T-cell (primary cell): ENCODE measurements at regions of chr16 and their contacts with region 1.

Region 1: DNA sequence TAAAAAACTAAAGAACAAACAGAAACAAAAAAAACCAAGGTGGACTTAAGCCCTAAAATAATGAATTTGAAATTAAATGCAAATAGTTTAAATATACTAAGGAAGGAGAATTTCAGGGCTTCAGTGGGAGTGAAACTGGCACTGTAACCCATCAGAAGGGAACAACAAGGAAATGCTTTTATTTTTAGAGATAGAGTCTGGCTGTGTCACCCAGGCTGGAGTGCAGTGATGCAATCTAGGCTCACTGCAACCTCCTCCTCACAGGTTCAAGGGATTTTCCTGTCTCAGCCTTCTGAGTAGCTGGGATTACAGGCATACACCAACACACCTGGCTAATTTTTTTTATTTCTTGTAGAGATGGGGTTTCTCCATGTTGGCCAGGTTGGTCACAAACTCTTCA is 625.2 kb upstream of the CDH8 start:
- DNase-seq: no peak
- ATAC-seq: no peak
- H3K4me3 ChIP-seq: no peak overlapping the region
- H3K4me3 Mint-ChIP-seq: no peak overlapping the region
- H3K27ac ChIP-seq: no peak overlapping the region
- H3K27ac Mint-ChIP-seq: no peak overlapping the region
- H3K4me1 ChIP-seq: no peaks in the 10 kb centered on the region
- H3K4me1 Mint-ChIP-seq: no peaks in the 10 kb centered on the region
- H3K27me3 ChIP-seq: no peaks in the 10 kb centered on the region
- H3K27me3 Mint-ChIP-seq: no peaks in the 10 kb centered on the region

Region 2: GRCh38 chr16:62392698-62393097 is 268.7 kb before region 1 on chr16:
- CTCF ChIA-PET with region 1: no interaction called
- POLR2A ChIA-PET with region 1: no interaction called
- DNase-seq: no peak
- ATAC-seq: no peak
- H3K4me3 ChIP-seq: no peak overlapping the region
- H3K4me3 Mint-ChIP-seq: no peak overlapping the region
- H3K27ac ChIP-seq: no peak overlapping the region
- H3K27ac Mint-ChIP-seq: no peak overlapping the region
- H3K4me1 ChIP-seq: no peaks in the 10 kb centered on the region
- H3K4me1 Mint-ChIP-seq: no peaks in the 10 kb centered on the region
- H3K27me3 ChIP-seq: no peaks in the 10 kb centered on the region
- H3K27me3 Mint-ChIP-seq: no peaks in the 10 kb centered on the region

Region 3: GRCh38 chr16:62568926-62569325 is 92.5 kb before region 1 on chr16:
- CTCF ChIA-PET with region 1: no interaction called
- POLR2A ChIA-PET with region 1: no interaction called
- DNase-seq: no peak
- ATAC-seq: no peak
- H3K4me3 ChIP-seq: no peak overlapping the region
- H3K4me3 Mint-ChIP-seq: no peak overlapping the region
- H3K27ac ChIP-seq: no peak overlapping the region
- H3K27ac Mint-ChIP-seq: no peak overlapping the region
- H3K4me1 ChIP-seq: no peaks in the 10 kb centered on the region
- H3K4me1 Mint-ChIP-seq: no peaks in the 10 kb centered on the region
- H3K27me3 ChIP-seq: no peaks in the 10 kb centered on the region
- H3K27me3 Mint-ChIP-seq: no peaks in the 10 kb centered on the region

Region 4: DNA sequence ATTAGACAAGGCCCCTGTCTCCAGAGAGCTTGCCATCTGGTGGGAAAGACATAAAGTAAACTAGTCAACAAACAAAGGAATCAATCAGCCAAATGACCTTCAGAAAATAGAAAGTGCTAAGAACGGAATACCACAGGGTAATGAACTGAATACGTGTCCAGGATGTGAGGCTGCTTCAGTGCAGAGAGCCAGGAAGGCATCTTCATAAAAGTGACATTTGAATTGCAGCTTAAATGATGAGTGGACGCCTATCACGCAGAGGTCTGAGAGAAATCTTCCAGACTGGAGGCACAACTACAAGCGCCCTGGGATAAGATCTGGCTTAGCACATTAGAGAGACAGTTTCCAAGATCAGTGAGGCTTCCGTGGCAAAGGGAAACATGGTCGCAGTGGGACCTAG is 51.1 kb before region 1 on chr16:
- CTCF ChIA-PET with region 1: no interaction called
- POLR2A ChIA-PET with region 1: no interaction called
- DNase-seq: no peak
- ATAC-seq: no peak
- H3K4me3 ChIP-seq: no peak overlapping the region
- H3K4me3 Mint-ChIP-seq: no peak overlapping the region
- H3K27ac ChIP-seq: no peak overlapping the region
- H3K27ac Mint-ChIP-seq: no peak overlapping the region
- H3K4me1 ChIP-seq: no peaks in the 10 kb centered on the region
- H3K4me1 Mint-ChIP-seq: no peaks in the 10 kb centered on the region
- H3K27me3 ChIP-seq: no peaks in the 10 kb centered on the region
- H3K27me3 Mint-ChIP-seq: no peaks in the 10 kb centered on the region

Region 5: GRCh38 chr16:62644030-62644801 is 17.2 kb before region 1 on chr16:
- CTCF ChIA-PET with region 1: no interaction called
- POLR2A ChIA-PET with region 1: no interaction called
- DNase-seq: no peak
- ATAC-seq: no peak
- H3K4me3 ChIP-seq: no peak overlapping the region
- H3K4me3 Mint-ChIP-seq: no peak overlapping the region
- H3K27ac ChIP-seq: no peak overlapping the region
- H3K27ac Mint-ChIP-seq: no peak overlapping the region
- H3K4me1 ChIP-seq: no peaks in the 10 kb centered on the region
- H3K4me1 Mint-ChIP-seq: no peaks in the 10 kb centered on the region
- H3K27me3 ChIP-seq: no peaks in the 10 kb centered on the region
- H3K27me3 Mint-ChIP-seq: no peaks in the 10 kb centered on the region

Region 6: DNA sequence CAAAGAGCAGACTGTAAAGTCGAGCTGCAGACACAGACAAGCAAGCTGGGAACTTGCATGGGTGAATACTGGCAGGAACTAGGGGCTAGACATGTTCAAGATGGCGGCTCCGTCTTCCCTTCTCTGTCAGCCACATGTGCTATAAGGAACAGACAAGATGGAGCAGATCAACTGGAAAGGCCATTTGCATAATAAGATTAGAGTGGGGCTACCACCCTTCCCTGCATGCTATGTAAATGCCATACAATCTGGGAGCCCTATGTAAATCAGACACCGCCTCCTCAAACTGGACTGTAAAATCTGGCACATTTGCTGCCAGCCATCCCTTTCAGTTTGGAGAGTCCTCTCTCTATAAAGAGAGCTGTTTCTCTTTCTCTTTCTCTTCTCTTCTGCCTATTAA is 14.9 kb after region 1 on chr16:
- CTCF ChIA-PET with region 1: interaction called in 1 of 2 experiments, 21 read pairs
- POLR2A ChIA-PET with region 1: no interaction called
- DNase-seq: no peak
- ATAC-seq: no peak
- H3K4me3 ChIP-seq: no peak overlapping the region
- H3K4me3 Mint-ChIP-seq: no peak overlapping the region
- H3K27ac ChIP-seq: no peak overlapping the region
- H3K27ac Mint-ChIP-seq: no peak overlapping the region
- H3K4me1 ChIP-seq: no peaks in the 10 kb centered on the region
- H3K4me1 Mint-ChIP-seq: no peaks in the 10 kb centered on the region
- H3K27me3 ChIP-seq: no peaks in the 10 kb centered on the region
- H3K27me3 Mint-ChIP-seq: no peaks in the 10 kb centered on the region